Endothelial cell of umbilical vein (primary cell): ENCODE measurements at regions of chr6 and their contacts with region 1.

Region 1: GRCh38 chr6:29016559-29017427 is 11.7 kb upstream of the ZNF311 start:
- DNase-seq: peak; percentile 86
- H3K4me3 ChIP-seq: peak overlapping the region; percentile 44 to 90 (median 80)
- H3K27ac ChIP-seq: no peak overlapping the region
- H3K4me1 ChIP-seq: peaks cover 9% of the 10 kb centered on the region
- H3K27me3 ChIP-seq: peaks cover 2 to 3% of the 10 kb centered on the region in 2 experiments
- CTCF ChIP-seq: peak; percentile 72 to 78
- POLR2A ChIP-seq: no peak

Region 2: GRCh38 chr6:28895134-28895812 is 121.5 kb before region 1 on chr6:
- CTCF ChIA-PET with region 1: interaction called, 5 read pairs
- POLR2A ChIA-PET with region 1: no interaction called
- dilution Hi-C with region 1: no loop called
- intact Hi-C with region 1: loop called (anchors 1 kb)
- DNase-seq: peak; percentile 98
- H3K4me3 ChIP-seq: peak overlapping the region; percentile 22 to 82 (median 68)
- H3K27ac ChIP-seq: peak overlapping the region; percentile 88
- H3K4me1 ChIP-seq: peaks cover 6% of the 10 kb centered on the region
- H3K27me3 ChIP-seq: no peaks in the 10 kb centered on the region
- CTCF ChIP-seq: no peak
- POLR2A ChIP-seq: peak; percentile 92

Region 3: GRCh38 chr6:28969129-28969528 is 47.7 kb before region 1 on chr6:
- CTCF ChIA-PET with region 1: interaction called, 12 read pairs
- POLR2A ChIA-PET with region 1: no interaction called
- dilution Hi-C with region 1: no loop called
- intact Hi-C with region 1: loop called (anchors 1 kb)
- DNase-seq: no peak
- H3K4me3 ChIP-seq: no peak overlapping the region
- H3K27ac ChIP-seq: no peak overlapping the region
- H3K4me1 ChIP-seq: no peaks in the 10 kb centered on the region
- H3K27me3 ChIP-seq: no peaks in the 10 kb centered on the region
- CTCF ChIP-seq: peak in 1 of 2 donors; percentile 22
- POLR2A ChIP-seq: no peak

Region 4: GRCh38 chr6:29589423-29590048 is 572.7 kb after region 1 on chr6:
- CTCF ChIA-PET with region 1: interaction called, 5 read pairs
- POLR2A ChIA-PET with region 1: no interaction called
- dilution Hi-C with region 1: no loop called
- intact Hi-C with region 1: loop called (anchors 5 kb)
- DNase-seq: peak; percentile 57
- H3K4me3 ChIP-seq: no peak overlapping the region
- H3K27ac ChIP-seq: no peak overlapping the region
- H3K4me1 ChIP-seq: no peaks in the 10 kb centered on the region
- H3K27me3 ChIP-seq: peaks cover 0 to 8% of the 10 kb centered on the region in 2 experiments
- CTCF ChIP-seq: peak; percentile 73 to 84
- POLR2A ChIP-seq: no peak